Calu3 (cell line): ENCODE measurements at regions of chr5 and their contacts with region 1.

Region 1: DNA sequence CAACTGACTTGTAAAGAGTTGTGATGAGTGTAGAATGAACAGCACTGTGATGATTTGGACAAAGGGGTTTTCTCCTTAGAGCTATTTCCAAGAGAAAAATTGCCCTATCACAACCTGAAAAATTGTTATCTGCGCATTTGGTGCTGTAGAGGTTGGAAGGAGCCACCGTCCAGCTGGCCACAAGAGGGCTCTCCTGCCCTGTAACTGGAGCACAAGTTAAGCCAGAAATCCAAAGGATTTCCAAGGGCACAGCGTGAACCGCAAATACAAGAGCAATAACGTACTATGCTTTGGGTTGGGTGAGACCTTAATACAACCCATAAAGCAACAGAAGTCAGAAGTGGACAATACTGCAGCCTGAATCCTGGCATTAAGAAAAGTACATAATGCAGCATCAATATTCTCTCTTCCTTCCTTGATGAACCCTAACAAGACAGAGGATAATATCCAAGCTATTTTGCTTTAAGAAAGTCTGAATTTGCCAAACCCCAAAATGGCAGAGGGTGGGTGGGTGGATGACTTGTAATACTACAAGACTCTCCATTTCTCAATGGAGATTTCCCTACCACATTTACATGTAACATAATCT is 56.8 kb upstream of the SMIM32 start:
- DNase-seq: peak; percentile 71
- H3K4me3 Mint-ChIP-seq: no peak overlapping the region
- H3K27ac Mint-ChIP-seq: no peak overlapping the region
- H3K4me1 Mint-ChIP-seq: no peaks in the 10 kb centered on the region
- H3K27me3 Mint-ChIP-seq: peaks cover 42% of the 10 kb centered on the region
- CTCF ChIP-seq: peak; percentile 88

Region 2: DNA sequence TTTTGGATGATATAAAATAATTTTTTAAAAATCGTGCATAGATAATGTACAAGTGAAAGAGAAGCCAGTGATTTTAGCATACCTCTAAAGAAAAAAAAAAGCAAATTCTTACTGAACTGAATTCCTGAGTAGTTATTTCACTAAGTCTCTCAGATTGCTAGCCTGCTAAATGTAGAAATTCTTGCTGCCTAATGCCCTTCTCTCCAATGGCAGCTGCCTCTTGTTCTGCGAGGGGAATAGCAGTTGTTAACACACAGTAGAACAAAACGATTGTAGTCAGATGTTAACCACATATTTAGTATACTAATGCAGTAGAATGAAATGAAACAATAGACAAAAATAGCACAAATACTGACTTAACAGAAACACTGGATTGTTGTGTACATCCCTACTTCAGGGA is 90.3 kb before region 1 on chr5:
- CTCF ChIA-PET with region 1: no interaction called
- intact Hi-C with region 1: no loop called
- DNase-seq: no peak
- H3K4me3 Mint-ChIP-seq: no peak overlapping the region
- H3K27ac Mint-ChIP-seq: no peak overlapping the region
- H3K4me1 Mint-ChIP-seq: peaks cover 29% of the 10 kb centered on the region
- H3K27me3 Mint-ChIP-seq: no peaks in the 10 kb centered on the region
- CTCF ChIP-seq: no peak

Region 3: GRCh38 chr5:136424835-136425584 is 175.2 kb after region 1 on chr5:
- CTCF ChIA-PET with region 1: no interaction called
- intact Hi-C with region 1: loop called (anchors 1 kb)
- DNase-seq: peak; percentile 91
- H3K4me3 Mint-ChIP-seq: no peak overlapping the region
- H3K27ac Mint-ChIP-seq: no peak overlapping the region
- H3K4me1 Mint-ChIP-seq: no peaks in the 10 kb centered on the region
- H3K27me3 Mint-ChIP-seq: peaks cover 76% of the 10 kb centered on the region
- CTCF ChIP-seq: peak; percentile 80

Region 4: GRCh38 chr5:136686192-136686872 is 436.6 kb after region 1 on chr5:
- CTCF ChIA-PET with region 1: interaction called, 7 read pairs
- intact Hi-C with region 1: loop called (anchors 1 kb)
- DNase-seq: peak; percentile 10
- H3K4me3 Mint-ChIP-seq: no peak overlapping the region
- H3K27ac Mint-ChIP-seq: no peak overlapping the region
- H3K4me1 Mint-ChIP-seq: no peaks in the 10 kb centered on the region
- H3K27me3 Mint-ChIP-seq: no peaks in the 10 kb centered on the region
- CTCF ChIP-seq: no peak

Region 5: DNA sequence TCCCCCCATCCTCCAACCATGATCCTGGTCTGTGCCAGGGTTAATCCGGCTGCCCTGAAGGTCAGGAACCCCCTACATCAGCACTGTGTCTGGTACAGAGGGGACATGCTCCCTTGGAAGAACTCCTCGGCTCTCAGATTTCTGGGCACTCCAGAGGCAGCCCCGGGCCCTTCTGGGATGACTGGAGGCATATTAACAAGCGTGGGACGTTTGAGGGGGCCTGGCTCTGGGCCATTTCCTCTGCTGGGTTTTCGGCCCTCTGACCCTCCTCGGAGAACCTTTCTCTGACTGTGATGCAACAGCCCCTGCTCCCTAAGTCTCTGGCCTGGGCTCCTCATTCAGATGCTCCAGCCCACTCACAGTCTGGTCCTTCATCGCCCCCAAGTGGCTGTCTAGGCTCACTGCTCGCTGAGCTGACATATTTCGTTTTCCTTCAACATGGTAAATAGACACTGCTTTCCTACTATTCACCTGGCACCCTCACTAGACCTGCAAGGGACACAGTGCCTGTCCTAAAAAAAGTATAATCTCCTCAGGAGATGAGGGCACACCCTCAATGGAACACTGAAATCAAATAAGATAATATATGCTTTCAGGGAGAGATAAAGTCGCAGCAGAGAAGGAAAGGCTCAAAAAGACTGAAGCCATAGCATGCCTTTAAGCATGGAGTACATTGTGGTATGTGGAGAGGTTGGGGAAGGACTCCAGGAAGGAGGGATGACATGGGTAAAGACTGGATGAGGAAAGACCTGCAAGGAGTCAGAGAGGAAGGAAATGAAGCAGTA is 520.3 kb after region 1 on chr5:
- CTCF ChIA-PET with region 1: interaction called, 8 read pairs
- intact Hi-C with region 1: loop called (anchors 1 kb)
- DNase-seq: peak; percentile 81
- H3K4me3 Mint-ChIP-seq: no peak overlapping the region
- H3K27ac Mint-ChIP-seq: no peak overlapping the region
- H3K4me1 Mint-ChIP-seq: peaks cover 7% of the 10 kb centered on the region
- H3K27me3 Mint-ChIP-seq: peaks cover 84% of the 10 kb centered on the region
- CTCF ChIP-seq: peak; percentile 73